Activated CD4-positive, alpha-beta T cell treated with anti-CD3 and anti-CD28 coated beads for 36 hours (primary cell): ENCODE measurements at regions of chr2 and their contacts with region 1.

Region 1: DNA sequence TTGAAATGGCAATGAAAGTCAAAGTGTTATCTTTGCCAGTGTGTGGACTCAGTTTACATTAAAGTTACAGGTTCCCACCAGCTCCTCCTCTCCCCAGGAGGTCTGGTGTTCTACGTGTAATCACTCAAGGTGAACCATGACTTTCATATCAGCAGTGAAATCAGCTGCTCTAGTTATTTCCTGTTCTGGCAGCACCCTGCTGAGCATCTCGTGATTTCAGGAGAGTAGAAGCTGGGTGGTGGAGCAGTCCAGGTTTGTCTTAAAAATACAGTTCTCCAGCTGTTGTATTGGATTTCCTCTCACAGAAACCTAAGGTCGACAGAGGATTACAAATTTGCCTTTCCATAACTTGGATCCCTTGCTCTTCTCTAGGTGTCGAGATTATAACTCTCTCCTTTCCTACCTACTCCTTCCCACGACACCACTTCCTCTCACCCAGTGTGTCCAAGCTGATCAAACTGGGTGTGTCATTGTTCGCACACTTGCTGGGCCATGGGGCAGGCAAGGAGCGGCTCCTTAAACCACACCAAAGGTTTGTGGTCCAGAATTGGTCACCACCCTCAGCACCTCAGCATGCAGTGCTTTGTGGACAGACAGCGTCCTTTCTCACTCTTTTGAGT is 13.0 kb upstream of the ARHGAP25 start:
- DNase-seq: peak; percentile 53
- ATAC-seq: peak; percentile 32
- H3K4me3 Mint-ChIP-seq: peak overlapping the region; percentile 53
- H3K27ac Mint-ChIP-seq: peak overlapping the region; percentile 89
- H3K4me1 Mint-ChIP-seq: peaks cover 86% of the 10 kb centered on the region
- H3K27me3 Mint-ChIP-seq: no peaks in the 10 kb centered on the region

Region 2: GRCh38 chr2:68169297-68169696 is 552.3 kb before region 1 on chr2:
- CTCF ChIA-PET with region 1: no interaction called
- POLR2A ChIA-PET with region 1: no interaction called
- intact Hi-C with region 1: no loop called
- DNase-seq: no peak
- ATAC-seq: peak; percentile 62
- H3K4me3 Mint-ChIP-seq: no peak overlapping the region
- H3K27ac Mint-ChIP-seq: no peak overlapping the region
- H3K4me1 Mint-ChIP-seq: peaks cover 9% of the 10 kb centered on the region
- H3K27me3 Mint-ChIP-seq: no peaks in the 10 kb centered on the region

Region 3: DNA sequence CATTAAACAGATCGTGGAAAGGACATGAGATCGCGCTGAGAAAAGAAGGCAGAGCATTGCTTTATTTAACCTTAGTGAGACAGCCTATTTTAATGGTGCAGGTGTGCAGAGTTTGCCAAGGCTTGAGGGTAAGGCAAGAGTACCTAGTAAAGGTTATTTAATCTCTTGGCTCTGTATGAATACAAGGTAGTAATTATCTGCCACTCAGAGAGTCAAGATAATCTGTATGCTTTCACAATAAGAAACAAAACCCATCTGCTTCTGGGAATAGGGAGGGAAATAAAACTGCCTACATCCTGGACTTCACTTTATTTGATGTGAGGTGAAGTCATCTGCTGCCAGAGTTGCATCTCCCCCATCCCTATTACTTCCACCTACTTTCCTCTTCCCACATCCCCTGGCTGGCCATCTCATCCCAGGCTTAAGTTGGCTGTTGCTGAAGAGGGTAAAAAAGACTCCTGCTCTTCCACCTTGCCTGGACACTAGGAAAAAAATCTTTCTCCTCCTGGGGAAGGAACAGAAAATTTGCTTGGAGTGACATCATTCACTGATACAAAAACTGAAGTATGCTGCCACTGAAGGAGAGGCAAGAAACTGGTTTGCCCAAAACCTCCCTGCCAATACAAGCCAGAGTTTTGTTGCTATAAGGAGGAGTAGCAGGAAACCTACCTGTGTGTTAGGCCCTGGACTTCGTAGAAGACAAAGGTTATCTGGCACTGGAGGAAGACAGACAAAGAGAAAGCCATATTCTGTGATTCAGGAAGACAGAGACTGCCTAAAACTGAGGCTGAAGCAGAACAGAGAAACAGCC is 22.8 kb before region 1 on chr2:
- CTCF ChIA-PET with region 1: no interaction called
- POLR2A ChIA-PET with region 1: no interaction called
- intact Hi-C with region 1: no loop called
- DNase-seq: no peak
- ATAC-seq: no peak
- H3K4me3 Mint-ChIP-seq: no peak overlapping the region
- H3K27ac Mint-ChIP-seq: no peak overlapping the region
- H3K4me1 Mint-ChIP-seq: no peaks in the 10 kb centered on the region
- H3K27me3 Mint-ChIP-seq: peaks cover 2% of the 10 kb centered on the region

Region 4: GRCh38 chr2:68734688-68735525 is 13.3 kb after region 1 on chr2 and contains the start of gene ARHGAP25:
- CTCF ChIA-PET with region 1: interaction called, 261 read pairs
- POLR2A ChIA-PET with region 1: interaction called, 13 read pairs
- intact Hi-C with region 1: loop called (anchors 1 kb)
- DNase-seq: peak; percentile 84
- ATAC-seq: peak; percentile 75
- H3K4me3 Mint-ChIP-seq: no peak within 1 kb of the TSS
- H3K27ac Mint-ChIP-seq: no peak within 1 kb of the TSS
- H3K4me1 Mint-ChIP-seq: peaks cover 40% of the 10 kb centered on the region
- H3K27me3 Mint-ChIP-seq: no peaks in the 10 kb centered on the region
- total RNA-seq, gene ARHGAP25: 57.9 to 73.2 TPM

Region 5: DNA sequence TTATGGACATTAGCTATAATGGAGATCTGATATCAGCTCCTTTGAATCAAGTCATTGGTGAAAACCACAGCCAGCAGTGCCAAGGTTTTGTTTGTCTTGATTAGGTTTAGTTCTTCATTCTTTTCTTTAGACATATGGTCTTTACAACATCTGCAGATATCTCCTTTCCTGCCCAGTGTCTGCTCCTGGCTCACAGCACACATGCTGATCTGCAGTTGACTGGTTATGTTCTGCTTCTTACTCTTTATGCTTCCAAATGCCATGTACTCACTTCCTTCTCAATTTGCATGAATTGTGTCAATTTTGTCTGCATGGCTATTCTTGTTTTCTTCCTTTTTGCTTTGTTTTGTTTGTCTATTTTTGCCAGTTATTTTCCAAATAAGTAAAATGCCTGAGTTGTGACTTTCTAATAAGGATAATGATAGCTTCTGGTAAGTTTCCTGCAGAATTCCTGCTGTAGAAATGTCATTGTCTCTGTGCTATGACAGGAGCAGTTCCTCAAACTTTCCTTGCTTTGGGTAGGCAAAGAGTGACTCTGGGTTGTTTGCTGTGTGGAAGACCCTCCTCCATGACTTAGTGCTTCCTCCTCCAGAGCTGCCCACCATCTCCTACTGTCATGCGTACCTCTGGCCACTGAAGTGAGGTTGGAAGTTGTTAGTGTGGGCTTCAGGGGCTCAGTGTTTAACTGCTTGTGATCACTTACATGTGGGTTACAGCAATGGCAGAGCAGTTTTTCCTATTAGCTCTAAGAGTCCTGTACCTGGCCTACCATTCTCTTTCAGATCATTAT is 21.2 kb after region 1 on chr2:
- CTCF ChIA-PET with region 1: interaction called, 261 read pairs
- POLR2A ChIA-PET with region 1: interaction called, 5 read pairs
- intact Hi-C with region 1: no loop called
- DNase-seq: no peak
- ATAC-seq: no peak
- H3K4me3 Mint-ChIP-seq: peak overlapping the region; percentile 33
- H3K27ac Mint-ChIP-seq: peak overlapping the region; percentile 80
- H3K4me1 Mint-ChIP-seq: peaks cover 97% of the 10 kb centered on the region
- H3K27me3 Mint-ChIP-seq: no peaks in the 10 kb centered on the region